Dendritic cell treated with granulocyte-macrophage colony-stimulating factor and Interleukin-4, amounts not matched to agents 40 ng/mL and 50 ng/mL, for 4 days (primary cell): ENCODE measurements at regions of chr15 and their contacts with region 1.

Region 1: GRCh38 chr15:43776718-43777583 is at the start of gene ELL3:
- H3K4me3 Mint-ChIP-seq: peak within 1 kb of the TSS; percentile 88
- H3K27ac Mint-ChIP-seq: peak within 1 kb of the TSS; percentile 95
- H3K4me1 Mint-ChIP-seq: peaks cover 54% of the 10 kb centered on the region
- H3K27me3 Mint-ChIP-seq: no peaks in the 10 kb centered on the region

Region 2: DNA sequence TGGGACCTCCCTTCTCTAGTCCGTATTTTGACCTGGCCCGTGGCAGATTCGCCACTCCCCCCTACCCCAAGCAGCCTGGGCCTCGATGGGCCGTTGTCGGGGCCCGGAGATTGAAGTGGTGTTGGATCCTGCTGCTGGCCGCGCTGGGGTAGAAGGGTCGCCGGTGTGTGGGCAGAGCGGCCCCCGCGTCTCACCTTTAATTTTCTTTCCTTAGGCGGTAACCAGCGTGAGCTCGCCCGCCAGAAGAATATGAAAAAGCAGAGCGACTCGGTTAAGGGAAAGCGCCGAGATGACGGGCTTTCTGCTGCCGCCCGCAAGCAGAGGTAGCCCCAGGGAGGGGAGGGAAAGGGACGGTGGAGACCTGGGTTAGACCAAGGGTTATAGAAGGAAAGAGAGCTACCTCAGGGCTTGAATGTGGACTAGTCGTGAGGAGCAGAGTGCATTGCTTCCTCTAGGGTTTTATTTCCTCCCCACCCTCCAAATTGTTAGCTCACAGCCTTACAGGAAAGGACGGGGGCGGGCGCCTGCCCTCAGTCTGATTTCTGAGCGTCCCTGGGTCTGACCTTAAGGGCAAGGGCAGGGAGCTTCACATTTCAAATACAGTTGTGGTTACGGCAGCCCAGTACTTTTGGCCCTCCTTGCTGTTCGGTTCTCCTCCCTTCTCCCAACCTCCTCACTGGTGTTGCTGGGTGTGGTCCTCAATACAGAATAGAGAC is 16.0 kb after region 1 on chr15:
- intact Hi-C with region 1: loop called (anchors 1 kb)
- H3K4me3 Mint-ChIP-seq: peak overlapping the region; percentile 82
- H3K27ac Mint-ChIP-seq: peak overlapping the region; percentile 100
- H3K4me1 Mint-ChIP-seq: peaks cover 52% of the 10 kb centered on the region
- H3K27me3 Mint-ChIP-seq: no peaks in the 10 kb centered on the region

Region 3: DNA sequence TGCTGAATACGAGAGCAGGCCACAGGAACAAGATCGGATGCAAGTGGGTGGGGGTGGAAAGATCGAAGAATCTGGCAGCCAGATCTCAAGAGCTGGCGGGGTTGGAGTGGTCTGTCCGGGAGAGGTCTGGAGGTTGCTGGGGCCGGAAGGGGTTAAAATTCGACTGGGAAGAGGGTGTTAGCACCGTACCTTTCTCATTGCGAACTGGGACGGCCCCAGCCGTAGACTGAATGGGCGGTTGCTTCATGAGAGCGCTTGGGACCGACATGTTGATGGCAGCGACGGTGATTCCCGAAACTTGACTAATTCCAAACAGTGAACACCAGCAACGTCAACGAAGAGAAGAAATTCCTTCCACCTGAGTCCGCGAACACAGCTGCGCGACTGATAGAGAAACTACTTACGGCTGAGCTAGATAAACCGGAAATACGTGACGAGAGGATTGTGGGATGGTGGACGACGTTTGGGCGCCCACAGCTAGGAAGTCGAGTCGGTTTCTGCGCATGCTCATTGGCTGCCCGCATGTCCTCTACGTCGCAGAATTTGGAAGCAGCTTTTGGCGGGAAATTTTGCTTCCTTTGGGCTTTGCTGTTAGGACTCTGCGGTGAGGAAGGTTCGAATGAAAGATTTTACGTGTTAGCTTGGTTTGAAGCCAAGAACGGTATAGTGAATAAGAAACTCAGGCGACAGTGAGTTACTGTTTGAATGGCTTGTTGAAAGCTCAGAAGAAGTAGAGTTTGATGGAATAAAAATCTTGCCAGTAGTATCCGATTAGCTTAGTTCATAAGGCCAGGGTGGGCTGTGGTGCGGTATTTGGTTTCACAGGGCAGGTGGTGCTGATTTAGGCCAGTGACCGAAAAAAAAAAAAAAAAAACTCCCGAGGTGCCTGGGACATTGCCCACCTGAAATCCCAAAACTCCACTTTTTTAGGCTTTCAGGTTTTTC is 47.6 kb after region 1 on chr15 and contains the start of gene MFAP1:
- intact Hi-C with region 1: loop called (anchors 10 kb)
- H3K4me3 Mint-ChIP-seq: peak within 1 kb of the TSS; percentile 98
- H3K27ac Mint-ChIP-seq: peak within 1 kb of the TSS; percentile 99
- H3K4me1 Mint-ChIP-seq: peaks cover 56% of the 10 kb centered on the region
- H3K27me3 Mint-ChIP-seq: no peaks in the 10 kb centered on the region